Endothelial cell of umbilical vein (primary cell): ENCODE measurements at regions of chr15 and their contacts with region 1.

Region 1: GRCh38 chr15:81071120-81071519 is 63.0 kb upstream of the CFAP161 start:
- DNase-seq: peak; percentile 85
- H3K4me3 ChIP-seq: no peak overlapping the region
- H3K27ac ChIP-seq: no peak overlapping the region
- H3K4me1 ChIP-seq: peaks cover 16% of the 10 kb centered on the region
- H3K27me3 ChIP-seq: no peaks in the 10 kb centered on the region
- CTCF ChIP-seq: no peak
- POLR2A ChIP-seq: no peak

Region 2: DNA sequence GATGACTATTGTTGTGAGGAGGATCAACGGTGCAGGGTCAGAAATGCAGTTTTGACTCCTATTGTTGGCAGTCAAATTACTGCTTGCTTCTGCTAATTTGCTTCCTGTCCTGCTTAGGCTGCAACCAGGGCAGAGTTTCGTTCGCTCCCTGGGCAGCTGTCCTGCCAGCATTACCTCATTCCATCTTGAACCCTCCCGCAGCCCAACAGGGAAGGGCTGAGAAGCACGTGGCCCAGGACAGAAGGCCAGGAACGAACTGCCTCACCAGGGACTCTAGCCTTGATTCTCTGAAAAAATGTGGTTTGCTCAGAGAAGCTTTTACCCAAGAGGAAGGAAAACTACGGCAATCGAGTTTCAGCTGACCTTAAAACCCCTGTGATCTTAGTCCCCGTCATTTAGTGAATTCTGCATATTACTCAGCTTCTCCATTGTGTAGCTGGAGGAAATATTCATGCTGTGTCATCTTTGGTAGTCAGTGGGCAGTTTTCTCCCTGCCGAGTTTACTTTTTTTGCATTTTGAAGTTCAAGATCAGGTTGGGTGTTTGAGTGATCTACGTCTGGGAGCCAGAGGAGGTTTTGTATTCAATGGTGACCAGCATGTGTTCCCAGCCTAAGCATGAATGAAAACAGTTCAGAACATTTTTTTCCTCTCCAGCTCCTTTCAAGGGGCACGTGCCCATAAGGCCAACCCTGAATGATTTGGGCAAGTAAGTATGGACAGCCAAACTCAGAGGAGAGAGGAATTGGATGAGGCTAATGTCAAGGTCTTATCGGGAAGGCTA is 47.4 kb before region 1 on chr15:
- CTCF ChIA-PET with region 1: interaction called, 3 read pairs
- POLR2A ChIA-PET with region 1: interaction called, 3 read pairs
- dilution Hi-C with region 1: no loop called
- intact Hi-C with region 1: loop called (anchors 2 kb)
- DNase-seq: peak; percentile 91
- H3K4me3 ChIP-seq: no peak overlapping the region
- H3K27ac ChIP-seq: peak overlapping the region; percentile 97
- H3K4me1 ChIP-seq: peaks cover 23% of the 10 kb centered on the region
- H3K27me3 ChIP-seq: no peaks in the 10 kb centered on the region
- CTCF ChIP-seq: no peak
- POLR2A ChIP-seq: no peak

Region 3: DNA sequence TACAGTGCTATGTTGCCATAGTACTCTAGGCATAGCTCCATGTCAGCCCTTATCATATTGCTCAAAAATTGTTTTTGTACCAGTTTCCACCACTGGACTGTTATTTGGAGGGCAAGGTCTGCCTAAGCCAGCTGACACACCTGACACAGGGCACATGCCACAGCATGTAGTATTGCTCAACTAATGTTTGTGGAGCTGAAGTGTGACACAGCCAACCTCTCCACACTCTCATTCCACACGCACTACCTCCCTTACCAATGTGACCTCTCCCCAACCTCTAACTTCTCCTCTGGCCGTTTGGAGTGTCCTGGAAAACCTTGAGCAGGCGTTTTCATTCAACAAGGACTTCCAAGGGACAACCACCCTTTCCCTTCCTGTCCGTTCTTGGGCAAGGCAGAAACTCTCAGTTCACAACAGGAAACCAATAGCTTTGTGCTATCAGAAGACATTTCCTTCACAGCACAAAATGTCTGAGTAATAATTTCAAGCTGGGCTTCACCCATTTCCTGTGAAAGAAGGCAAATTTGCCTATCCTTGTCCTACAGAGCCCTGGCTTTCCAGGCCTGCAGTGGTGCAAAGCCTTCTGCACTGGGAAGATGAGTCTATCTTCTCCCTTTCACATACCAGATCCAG is 32.0 kb before region 1 on chr15:
- CTCF ChIA-PET with region 1: interaction called, 6 read pairs
- POLR2A ChIA-PET with region 1: no interaction called
- dilution Hi-C with region 1: no loop called
- intact Hi-C with region 1: loop called (anchors 1 kb)
- DNase-seq: peak; percentile 87
- H3K4me3 ChIP-seq: no peak overlapping the region
- H3K27ac ChIP-seq: peak overlapping the region; percentile 76
- H3K4me1 ChIP-seq: peaks cover 22% of the 10 kb centered on the region
- H3K27me3 ChIP-seq: no peaks in the 10 kb centered on the region
- CTCF ChIP-seq: no peak
- POLR2A ChIP-seq: peak; percentile 31

Region 4: GRCh38 chr15:81085213-81085612 is 14.1 kb after region 1 on chr15:
- CTCF ChIA-PET with region 1: interaction called, 3 read pairs
- POLR2A ChIA-PET with region 1: no interaction called
- dilution Hi-C with region 1: no loop called
- intact Hi-C with region 1: loop called (anchors 1 kb)
- DNase-seq: peak; percentile 68
- H3K4me3 ChIP-seq: no peak overlapping the region
- H3K27ac ChIP-seq: no peak overlapping the region
- H3K4me1 ChIP-seq: peaks cover 13% of the 10 kb centered on the region
- H3K27me3 ChIP-seq: no peaks in the 10 kb centered on the region
- CTCF ChIP-seq: no peak
- POLR2A ChIP-seq: no peak

Region 5: DNA sequence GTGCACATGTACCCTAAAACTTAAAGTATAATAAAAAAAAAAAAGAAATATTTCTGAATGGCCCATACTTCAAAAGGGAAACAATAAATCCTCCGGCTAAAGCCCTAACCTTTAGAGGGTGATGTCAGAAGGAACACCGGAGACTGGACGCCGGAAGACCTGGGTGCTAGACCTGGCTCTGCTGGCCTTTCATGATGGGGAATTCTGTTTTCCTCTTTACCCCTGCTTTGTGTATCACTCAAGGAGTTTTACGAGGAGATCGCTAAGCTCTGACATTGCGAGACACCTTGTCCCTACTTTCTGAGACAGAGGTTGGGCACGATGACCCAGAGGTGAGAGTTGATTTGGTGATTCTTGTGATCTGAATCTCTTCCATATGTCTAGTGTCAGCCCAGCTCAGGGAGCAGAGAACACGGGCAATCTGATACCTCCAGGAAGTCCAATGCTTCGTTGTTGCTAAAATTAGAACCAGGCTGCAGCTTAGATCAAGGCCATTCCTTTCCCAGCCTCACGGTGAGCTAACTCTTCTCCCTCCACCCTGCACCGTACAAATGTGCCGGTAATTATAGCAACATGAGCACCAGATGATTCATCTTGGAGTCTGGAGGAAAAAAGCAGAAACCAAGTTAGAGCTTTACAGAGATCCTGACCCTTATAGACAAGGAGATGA is 20.9 kb after region 1 on chr15:
- CTCF ChIA-PET with region 1: interaction called, 10 read pairs
- POLR2A ChIA-PET with region 1: no interaction called
- dilution Hi-C with region 1: no loop called
- intact Hi-C with region 1: loop called (anchors 2 kb)
- DNase-seq: peak; percentile 95
- H3K4me3 ChIP-seq: peak overlapping the region in 1 of 3 experiments; percentile 16
- H3K27ac ChIP-seq: peak overlapping the region; percentile 51
- H3K4me1 ChIP-seq: peaks cover 14% of the 10 kb centered on the region
- H3K27me3 ChIP-seq: no peaks in the 10 kb centered on the region
- CTCF ChIP-seq: no peak
- POLR2A ChIP-seq: no peak